Activated T-helper 2 cell treated with anti-CD3 and anti-CD28 coated beads, Interferon-gamma antibody, Interleukin-2, Interleukin-4, amounts not matched to agents 10 μg/mL and 5 μg/mL and 100 μg/mL, durations not matched to agents 14 hours and 24 hours and 36 hours (primary cell): ENCODE measurements at regions of chr6 and their contacts with region 1.

Region 1: GRCh38 chr6:25490018-25490801 is 161.8 kb upstream of the SCGN start:
- DNase-seq: peak; percentile 52
- H3K4me3 Mint-ChIP-seq: no peak overlapping the region
- H3K27ac Mint-ChIP-seq: no peak overlapping the region
- H3K4me1 Mint-ChIP-seq: no peaks in the 10 kb centered on the region
- H3K27me3 Mint-ChIP-seq: no peaks in the 10 kb centered on the region

Region 2: DNA sequence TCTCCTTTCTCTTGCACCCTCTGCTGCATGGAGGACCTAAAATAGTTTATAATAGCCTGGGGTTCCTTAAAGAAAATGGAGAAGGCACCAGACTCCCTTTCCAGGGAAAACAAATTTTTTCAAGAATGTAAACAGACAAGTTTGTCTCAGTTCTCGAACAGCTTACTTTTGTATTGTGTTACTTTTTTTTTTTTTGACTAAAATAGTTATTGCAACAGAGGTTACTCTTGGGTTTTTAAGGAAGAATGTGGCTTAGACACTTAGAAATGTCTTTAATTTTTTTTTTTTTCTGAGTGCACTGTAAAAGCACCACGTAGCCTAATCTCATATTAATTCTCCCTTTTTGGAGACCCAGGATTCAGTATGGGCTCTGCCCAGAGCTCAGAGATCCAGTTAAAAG is 359.7 kb before region 1 on chr6:
- intact Hi-C with region 1: no loop called
- DNase-seq: no peak
- H3K4me3 Mint-ChIP-seq: peak overlapping the region; percentile 20
- H3K27ac Mint-ChIP-seq: peak overlapping the region; percentile 14
- H3K4me1 Mint-ChIP-seq: peaks cover 43% of the 10 kb centered on the region
- H3K27me3 Mint-ChIP-seq: no peaks in the 10 kb centered on the region

Region 3: DNA sequence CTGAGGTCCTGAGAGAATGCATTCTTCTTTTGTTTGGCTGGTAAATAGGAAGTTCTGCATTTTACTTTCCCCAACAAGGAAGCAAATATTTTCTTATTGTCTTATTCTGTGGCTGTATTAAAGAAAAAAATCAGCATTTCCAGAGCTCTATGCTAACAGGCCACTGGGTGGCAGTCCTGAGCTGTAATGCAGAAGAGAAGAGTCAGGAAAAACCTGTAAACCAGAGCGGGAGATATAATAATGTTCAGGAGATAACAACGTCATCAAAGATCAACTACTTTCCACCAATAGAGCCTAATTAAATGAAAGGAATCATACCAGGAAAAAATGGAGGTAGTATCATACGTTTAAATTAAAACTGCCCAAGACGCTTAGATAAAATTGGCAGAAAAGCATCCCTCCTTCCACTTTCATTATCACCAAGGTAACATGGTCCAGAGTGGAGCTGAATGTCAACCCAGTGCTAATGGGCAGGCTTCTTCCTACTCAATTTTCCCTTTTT is 266.7 kb before region 1 on chr6:
- intact Hi-C with region 1: loop called (anchors 2 kb)
- DNase-seq: peak; percentile 24
- H3K4me3 Mint-ChIP-seq: peak overlapping the region; percentile 57
- H3K27ac Mint-ChIP-seq: no peak overlapping the region
- H3K4me1 Mint-ChIP-seq: peaks cover 13% of the 10 kb centered on the region
- H3K27me3 Mint-ChIP-seq: peaks cover 6% of the 10 kb centered on the region

Region 4: DNA sequence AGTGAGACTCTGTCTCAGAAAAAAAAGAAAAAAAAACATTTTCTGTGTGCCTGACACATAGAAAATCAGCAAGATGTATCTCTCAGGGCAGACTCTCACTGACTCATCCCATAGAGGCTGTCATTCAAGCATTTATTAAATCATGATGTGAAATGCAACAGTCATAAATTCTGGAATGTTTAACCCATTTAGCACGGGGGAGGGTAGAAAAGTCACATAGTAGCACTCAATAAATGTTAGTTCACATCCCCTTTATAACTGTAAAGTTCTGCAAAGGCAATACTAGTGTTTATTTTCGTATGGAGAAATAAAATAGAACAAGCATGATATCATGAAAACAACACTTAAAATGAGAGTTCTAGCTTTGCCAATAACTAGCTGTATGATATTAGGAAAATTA is 226.6 kb before region 1 on chr6:
- intact Hi-C with region 1: loop called (anchors 1 kb)
- DNase-seq: no peak
- H3K4me3 Mint-ChIP-seq: no peak overlapping the region
- H3K27ac Mint-ChIP-seq: no peak overlapping the region
- H3K4me1 Mint-ChIP-seq: peaks cover 2% of the 10 kb centered on the region
- H3K27me3 Mint-ChIP-seq: peaks cover 23% of the 10 kb centered on the region